Activated T-helper 2 cell treated with anti-CD3 and anti-CD28 coated beads, Interferon-gamma antibody, Interleukin-2, Interleukin-4, amounts not matched to agents 10 μg/mL and 5 μg/mL and 100 μg/mL, durations not matched to agents 14 hours and 24 hours and 36 hours (primary cell): ENCODE measurements at regions of chr20 and their contacts with region 1.

Region 1: DNA sequence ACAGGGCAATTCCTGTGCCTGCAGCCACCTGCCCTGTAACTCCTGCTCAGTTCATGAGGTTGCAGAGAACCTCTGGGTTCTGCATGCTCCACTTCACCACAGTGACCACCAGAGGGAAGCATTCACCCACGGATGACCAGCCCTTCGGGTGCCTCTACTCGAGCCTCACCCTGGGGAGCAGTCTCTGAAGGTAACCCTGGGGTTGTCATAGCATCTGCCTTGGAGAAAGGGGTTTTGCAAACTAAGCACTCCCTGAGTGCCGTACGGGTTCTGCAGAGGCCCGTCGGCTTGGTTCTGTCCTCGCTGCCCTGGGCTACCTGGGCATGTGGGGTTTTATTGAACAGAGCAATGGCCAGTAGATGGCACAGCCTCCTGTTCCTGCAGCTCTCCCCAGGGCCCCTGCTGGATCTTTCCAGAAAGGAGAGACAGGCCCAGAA is 10.2 kb upstream of the CST5 start:
- DNase-seq: peak; percentile 55
- H3K4me3 Mint-ChIP-seq: no peak overlapping the region
- H3K27ac Mint-ChIP-seq: no peak overlapping the region
- H3K4me1 Mint-ChIP-seq: no peaks in the 10 kb centered on the region
- H3K27me3 Mint-ChIP-seq: peaks cover 8% of the 10 kb centered on the region

Region 2: GRCh38 chr20:24160563-24161375 is 271.0 kb after region 1 on chr20:
- intact Hi-C with region 1: loop called (anchors 10 kb)
- DNase-seq: no peak
- H3K4me3 Mint-ChIP-seq: no peak overlapping the region
- H3K27ac Mint-ChIP-seq: no peak overlapping the region
- H3K4me1 Mint-ChIP-seq: peaks cover 9% of the 10 kb centered on the region
- H3K27me3 Mint-ChIP-seq: no peaks in the 10 kb centered on the region